CD8-positive, alpha-beta T cell (primary cell): ENCODE measurements at regions of chr10 and their contacts with region 1.

Region 1: DNA sequence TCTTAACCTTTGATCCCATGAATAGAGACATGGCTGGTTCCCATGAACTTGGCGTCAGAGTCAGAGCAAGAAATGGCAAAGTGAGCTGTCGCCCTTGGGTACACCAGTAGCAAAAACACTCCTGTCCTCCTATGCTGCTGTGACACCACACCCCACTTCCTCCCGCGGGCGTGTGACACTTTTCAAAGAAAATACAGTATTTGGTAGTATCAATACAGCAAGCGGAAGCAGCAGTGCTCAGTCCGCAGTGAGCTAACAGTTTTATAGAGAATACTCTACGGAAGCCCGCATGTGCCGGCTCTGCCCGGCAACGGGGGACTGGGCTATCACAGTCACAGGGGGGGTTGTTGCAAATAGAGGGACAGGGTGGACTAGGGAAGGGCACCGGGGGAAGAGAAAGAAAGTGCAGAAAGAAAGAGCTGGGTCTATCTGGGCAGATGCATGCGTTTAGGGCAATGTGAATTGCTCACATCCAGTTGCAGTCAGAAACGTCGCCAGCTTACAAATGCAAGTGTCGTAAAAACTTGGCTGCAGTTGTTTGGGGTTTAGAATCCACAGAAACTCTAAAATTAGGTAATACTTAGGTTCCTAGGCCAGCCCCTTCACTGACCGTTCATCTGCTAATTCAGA is 49.8 kb downstream of the PRKCQ start:
- DNase-seq: peak; percentile 49 to 89 (median 77)
- ATAC-seq: peak; percentile 96
- H3K4me3 ChIP-seq: peak overlapping the region; percentile 38 to 42
- H3K4me3 Mint-ChIP-seq: peak overlapping the region; percentile 83
- H3K27ac ChIP-seq: peak overlapping the region; percentile 84 to 89
- H3K27ac Mint-ChIP-seq: peak overlapping the region; percentile 97
- H3K4me1 ChIP-seq: peaks cover 57% of the 10 kb centered on the region
- H3K4me1 Mint-ChIP-seq: peaks cover 85% of the 10 kb centered on the region
- H3K27me3 ChIP-seq: no peaks in the 10 kb centered on the region
- H3K27me3 Mint-ChIP-seq: no peaks in the 10 kb centered on the region
- CTCF ChIP-seq: no peak

Region 2: DNA sequence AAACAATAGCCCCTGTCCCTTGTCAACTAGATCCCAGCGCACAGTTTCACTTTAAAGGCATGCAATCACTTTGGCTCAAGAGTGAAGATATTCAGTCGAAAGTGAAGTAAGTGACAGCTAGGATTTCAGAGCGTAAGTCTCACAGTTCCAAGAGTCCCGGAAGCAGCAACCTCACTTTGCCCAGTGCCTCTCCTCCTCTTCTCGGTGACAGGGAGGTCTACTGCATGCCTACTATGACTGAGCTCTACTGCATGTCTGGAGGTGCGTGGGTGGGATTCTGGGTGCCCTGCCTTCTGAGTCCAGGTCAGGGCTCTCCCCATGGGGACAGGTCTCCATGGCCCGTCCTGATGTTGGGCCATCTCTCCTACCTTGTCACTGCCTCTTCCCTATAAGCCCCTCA is 32.7 kb after region 1 on chr10:
- CTCF ChIA-PET with region 1: interaction called, 5 read pairs
- POLR2A ChIA-PET with region 1: interaction called, 13 read pairs
- intact Hi-C with region 1: loop called in 1 of 2 experiments (anchors 5 kb)
- DNase-seq: peak in 5 of 9 experiments; percentile 6 to 68 (median 44)
- ATAC-seq: peak; percentile 64
- H3K4me3 ChIP-seq: no peak overlapping the region
- H3K4me3 Mint-ChIP-seq: peak overlapping the region; percentile 57
- H3K27ac ChIP-seq: peak overlapping the region; percentile 7 to 63
- H3K27ac Mint-ChIP-seq: peak overlapping the region; percentile 80
- H3K4me1 ChIP-seq: peaks cover 79% of the 10 kb centered on the region
- H3K4me1 Mint-ChIP-seq: peaks cover 91% of the 10 kb centered on the region
- H3K27me3 ChIP-seq: no peaks in the 10 kb centered on the region
- H3K27me3 Mint-ChIP-seq: no peaks in the 10 kb centered on the region
- CTCF ChIP-seq: no peak

Region 3: DNA sequence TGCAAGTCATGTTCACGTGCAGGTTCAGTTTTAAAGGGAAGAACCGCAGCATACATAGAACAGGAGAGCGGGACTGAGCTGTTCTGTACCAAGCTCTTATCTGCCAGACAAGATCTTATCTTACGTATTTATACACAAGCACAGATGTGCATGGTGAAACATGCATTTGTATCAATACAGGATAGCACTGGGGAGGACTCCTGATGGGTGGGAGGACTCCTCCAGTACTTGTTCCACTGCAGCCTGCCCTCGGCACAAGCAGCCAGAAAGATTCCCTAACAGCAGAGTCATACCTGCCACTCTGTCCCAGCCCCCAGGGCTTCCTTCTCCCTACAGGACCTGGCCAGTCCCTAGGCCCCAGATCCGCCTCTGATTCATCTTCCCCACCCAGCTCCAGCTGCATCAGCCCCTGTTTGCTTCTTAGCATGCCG is 62.9 kb after region 1 on chr10:
- CTCF ChIA-PET with region 1: interaction called, 4 read pairs
- POLR2A ChIA-PET with region 1: interaction called, 16 read pairs
- intact Hi-C with region 1: no loop called
- DNase-seq: peak in 2 of 9 experiments; percentile 29 to 53
- ATAC-seq: peak; percentile 45
- H3K4me3 ChIP-seq: no peak overlapping the region
- H3K4me3 Mint-ChIP-seq: peak overlapping the region; percentile 32
- H3K27ac ChIP-seq: peak overlapping the region; percentile 62 to 86
- H3K27ac Mint-ChIP-seq: peak overlapping the region; percentile 94
- H3K4me1 ChIP-seq: peaks cover 97% of the 10 kb centered on the region
- H3K4me1 Mint-ChIP-seq: peaks cover 96% of the 10 kb centered on the region
- H3K27me3 ChIP-seq: no peaks in the 10 kb centered on the region
- H3K27me3 Mint-ChIP-seq: no peaks in the 10 kb centered on the region
- CTCF ChIP-seq: no peak

Region 4: DNA sequence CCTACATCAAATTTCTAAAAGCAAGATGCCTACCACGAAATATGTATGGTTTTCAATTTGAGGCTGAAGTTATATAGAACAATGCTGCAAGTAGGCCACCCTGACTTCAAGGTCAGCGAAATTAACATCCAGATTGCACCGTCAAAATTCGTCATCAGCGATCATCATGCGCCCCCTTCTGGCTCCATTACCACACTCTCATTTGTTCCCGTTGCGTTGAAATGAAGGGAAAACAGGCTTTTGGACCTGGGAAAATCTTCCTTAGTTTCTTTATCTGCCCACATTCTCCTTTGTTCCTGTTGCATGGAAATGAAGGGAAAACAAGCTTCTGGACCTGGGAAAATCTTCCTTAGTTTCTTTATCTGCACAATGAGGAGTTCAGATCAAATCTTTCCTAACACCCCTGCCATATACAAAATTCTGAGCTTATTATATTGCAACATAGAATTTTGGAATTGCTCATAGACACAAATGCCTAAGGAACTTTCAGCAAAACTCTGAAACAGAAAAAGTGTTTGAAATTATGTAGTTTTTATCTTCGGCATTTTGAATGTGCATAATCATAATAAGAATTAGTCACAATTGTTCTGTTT is 148.0 kb after region 1 on chr10:
- CTCF ChIA-PET with region 1: no interaction called
- POLR2A ChIA-PET with region 1: no interaction called
- intact Hi-C with region 1: no loop called
- DNase-seq: peak; percentile 23 to 78 (median 68)
- ATAC-seq: peak; percentile 52
- H3K4me3 ChIP-seq: no peak overlapping the region
- H3K4me3 Mint-ChIP-seq: no peak overlapping the region
- H3K27ac ChIP-seq: no peak overlapping the region
- H3K27ac Mint-ChIP-seq: no peak overlapping the region
- H3K4me1 ChIP-seq: no peaks in the 10 kb centered on the region
- H3K4me1 Mint-ChIP-seq: peaks cover 4% of the 10 kb centered on the region
- H3K27me3 ChIP-seq: no peaks in the 10 kb centered on the region
- H3K27me3 Mint-ChIP-seq: no peaks in the 10 kb centered on the region
- CTCF ChIP-seq: peak; percentile 71